CD4-positive, alpha-beta T cell (primary cell): ENCODE measurements at regions of chr11 and their contacts with region 1.

Region 1: DNA sequence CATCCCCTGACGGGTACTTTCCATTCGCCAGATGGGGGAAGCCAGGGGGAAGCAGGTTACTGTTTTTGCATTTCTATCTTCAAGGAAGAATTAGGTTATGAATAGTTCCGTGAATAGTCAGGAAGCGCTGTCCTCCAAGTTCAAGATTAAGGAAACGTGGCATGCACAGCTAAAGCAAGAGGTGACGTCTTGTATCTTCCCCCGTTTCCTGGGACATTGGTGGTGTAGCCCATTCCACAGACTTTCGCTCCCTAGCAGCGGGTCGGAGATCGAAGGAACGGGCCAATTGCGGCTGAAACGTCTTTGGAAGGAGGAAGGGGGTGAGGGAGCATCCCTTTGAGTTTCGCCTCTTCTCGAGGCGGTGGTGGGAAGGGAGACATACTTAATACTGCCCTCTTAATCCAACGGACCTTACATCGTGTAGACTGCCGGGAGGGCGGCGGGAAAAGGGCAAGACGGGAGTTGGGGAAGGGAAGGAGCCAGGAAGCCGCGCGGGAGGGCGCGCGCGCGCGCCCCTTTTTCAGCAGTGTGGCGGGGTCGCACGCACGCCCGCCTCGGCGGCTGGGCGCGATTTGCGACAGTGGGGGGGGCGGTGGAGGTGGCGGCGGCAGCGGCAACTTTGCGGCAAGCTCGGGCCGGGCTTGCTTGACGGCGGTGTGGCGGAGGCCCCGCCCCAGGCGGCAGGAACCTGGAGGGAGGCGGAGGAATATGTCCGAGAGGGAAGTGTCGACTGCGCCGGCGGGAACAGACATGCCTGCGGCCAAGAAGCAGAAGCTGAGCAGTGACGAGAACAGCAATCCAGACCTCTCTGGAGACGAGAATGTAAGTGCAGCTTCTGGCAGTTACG is at the start of gene EED:
- DNase-seq: peak; percentile 86 to 97 (median 93)
- ATAC-seq: peak; percentile 83
- H3K4me3 ChIP-seq: peak within 1 kb of the TSS; percentile 82
- H3K4me3 Mint-ChIP-seq: no peak within 1 kb of the TSS
- H3K27ac ChIP-seq: peak within 1 kb of the TSS; percentile 99
- H3K27ac Mint-ChIP-seq: no peak within 1 kb of the TSS
- H3K4me1 ChIP-seq: peaks cover 4% of the 10 kb centered on the region
- H3K4me1 Mint-ChIP-seq: no peaks in the 10 kb centered on the region
- H3K27me3 ChIP-seq: no peaks in the 10 kb centered on the region
- H3K27me3 Mint-ChIP-seq: no peaks in the 10 kb centered on the region
- CTCF ChIP-seq: no peak
- total RNA-seq, gene EED: 32.1 to 35.4 TPM

Region 2: GRCh38 chr11:85647604-85648299 is 597.0 kb before region 1 on chr11 and contains the start of gene TMEM126A:
- CTCF ChIA-PET with region 1: no interaction called
- POLR2A ChIA-PET with region 1: interaction called, 15 read pairs
- intact Hi-C with region 1: loop called in 1 of 2 experiments (anchors 5 kb)
- DNase-seq: peak; percentile 81 to 95 (median 88)
- ATAC-seq: peak; percentile 99
- H3K4me3 ChIP-seq: peak within 1 kb of the TSS; percentile 84
- H3K4me3 Mint-ChIP-seq: peak within 1 kb of the TSS; percentile 97
- H3K27ac ChIP-seq: peak within 1 kb of the TSS; percentile 77 to 84
- H3K27ac Mint-ChIP-seq: peak within 1 kb of the TSS; percentile 89
- H3K4me1 ChIP-seq: peaks cover 20% of the 10 kb centered on the region
- H3K4me1 Mint-ChIP-seq: peaks cover 44% of the 10 kb centered on the region
- H3K27me3 ChIP-seq: peaks cover 0 to 8% of the 10 kb centered on the region in 2 experiments
- H3K27me3 Mint-ChIP-seq: peaks cover 23% of the 10 kb centered on the region
- CTCF ChIP-seq: no peak
- total RNA-seq, gene TMEM126A: 17.0 to 19.5 TPM

Region 3: DNA sequence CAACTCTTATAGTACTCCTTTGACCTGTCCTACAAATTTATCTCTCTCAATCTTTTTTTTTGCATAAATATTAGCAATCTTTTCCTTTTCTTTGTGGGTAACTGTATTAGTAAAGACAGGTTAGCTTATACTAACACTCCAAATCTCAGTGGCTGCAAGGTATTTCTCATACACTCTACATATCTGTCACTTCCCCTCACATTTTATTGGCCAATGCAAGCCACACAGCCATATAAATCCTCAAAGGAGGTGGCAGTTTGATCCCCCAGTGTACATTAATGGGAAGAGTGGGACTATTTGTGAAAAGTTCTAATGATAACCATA is 42.8 kb before region 1 on chr11:
- CTCF ChIA-PET with region 1: interaction called, 3 read pairs
- POLR2A ChIA-PET with region 1: no interaction called
- intact Hi-C with region 1: loop called in 1 of 2 experiments (anchors 1 kb)
- DNase-seq: peak in 4 of 14 experiments; percentile 6 to 43 (median 30)
- ATAC-seq: peak; percentile 71
- H3K4me3 ChIP-seq: peak overlapping the region; percentile 57
- H3K4me3 Mint-ChIP-seq: no peak overlapping the region
- H3K27ac ChIP-seq: no peak overlapping the region
- H3K27ac Mint-ChIP-seq: no peak overlapping the region
- H3K4me1 ChIP-seq: peaks cover 7% of the 10 kb centered on the region
- H3K4me1 Mint-ChIP-seq: no peaks in the 10 kb centered on the region
- H3K27me3 ChIP-seq: no peaks in the 10 kb centered on the region
- H3K27me3 Mint-ChIP-seq: no peaks in the 10 kb centered on the region
- CTCF ChIP-seq: no peak

Region 4: DNA sequence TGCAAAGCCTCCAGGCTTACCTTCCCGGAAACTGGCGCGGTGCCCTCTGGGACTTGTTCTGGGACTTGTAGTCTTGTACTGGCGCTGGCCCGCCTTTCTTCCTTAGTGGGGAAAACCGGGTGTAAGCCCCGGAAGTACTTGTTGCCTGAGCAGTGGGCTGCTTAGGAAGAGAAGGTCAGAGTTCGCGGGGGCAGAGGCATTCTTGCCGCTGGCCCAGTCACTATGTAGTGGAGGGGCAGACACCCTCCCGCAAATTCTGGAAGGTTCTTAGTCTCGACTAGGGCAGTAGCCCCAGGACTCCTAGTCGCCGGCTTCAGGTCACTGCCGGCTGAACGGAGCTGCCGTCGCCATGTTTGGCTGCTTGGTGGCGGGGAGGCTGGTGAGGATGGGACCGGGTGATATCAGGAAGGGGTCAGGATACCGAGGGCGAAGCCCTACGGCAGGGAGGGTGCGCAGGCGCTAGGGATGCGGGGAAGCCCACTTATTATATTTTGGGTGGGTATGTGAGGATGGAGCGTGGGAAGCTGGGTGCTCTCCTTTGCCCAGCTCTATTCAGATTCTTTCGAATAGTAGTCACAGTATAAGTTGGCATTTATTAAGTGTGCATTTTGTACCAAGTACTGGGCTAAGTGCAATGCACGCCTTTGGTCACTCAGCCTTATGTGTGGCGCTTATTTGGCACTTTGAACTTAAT is 57.5 kb after region 1 on chr11 and contains the start of gene HIKESHI:
- CTCF ChIA-PET with region 1: interaction called, 4 read pairs
- POLR2A ChIA-PET with region 1: interaction called, 6 read pairs
- intact Hi-C with region 1: loop called (anchors 1 to 2 kb)
- DNase-seq: peak; percentile 81 to 95 (median 90)
- ATAC-seq: peak; percentile 97
- H3K4me3 ChIP-seq: peak within 1 kb of the TSS; percentile 83
- H3K4me3 Mint-ChIP-seq: peak within 1 kb of the TSS; percentile 99
- H3K27ac ChIP-seq: peak within 1 kb of the TSS; percentile 58 to 85
- H3K27ac Mint-ChIP-seq: peak within 1 kb of the TSS; percentile 98
- H3K4me1 ChIP-seq: peaks cover 3% of the 10 kb centered on the region
- H3K4me1 Mint-ChIP-seq: peaks cover 33% of the 10 kb centered on the region
- H3K27me3 ChIP-seq: no peaks in the 10 kb centered on the region
- H3K27me3 Mint-ChIP-seq: no peaks in the 10 kb centered on the region
- CTCF ChIP-seq: no peak
- total RNA-seq, gene HIKESHI: 6.3 to 6.6 TPM

Region 5: DNA sequence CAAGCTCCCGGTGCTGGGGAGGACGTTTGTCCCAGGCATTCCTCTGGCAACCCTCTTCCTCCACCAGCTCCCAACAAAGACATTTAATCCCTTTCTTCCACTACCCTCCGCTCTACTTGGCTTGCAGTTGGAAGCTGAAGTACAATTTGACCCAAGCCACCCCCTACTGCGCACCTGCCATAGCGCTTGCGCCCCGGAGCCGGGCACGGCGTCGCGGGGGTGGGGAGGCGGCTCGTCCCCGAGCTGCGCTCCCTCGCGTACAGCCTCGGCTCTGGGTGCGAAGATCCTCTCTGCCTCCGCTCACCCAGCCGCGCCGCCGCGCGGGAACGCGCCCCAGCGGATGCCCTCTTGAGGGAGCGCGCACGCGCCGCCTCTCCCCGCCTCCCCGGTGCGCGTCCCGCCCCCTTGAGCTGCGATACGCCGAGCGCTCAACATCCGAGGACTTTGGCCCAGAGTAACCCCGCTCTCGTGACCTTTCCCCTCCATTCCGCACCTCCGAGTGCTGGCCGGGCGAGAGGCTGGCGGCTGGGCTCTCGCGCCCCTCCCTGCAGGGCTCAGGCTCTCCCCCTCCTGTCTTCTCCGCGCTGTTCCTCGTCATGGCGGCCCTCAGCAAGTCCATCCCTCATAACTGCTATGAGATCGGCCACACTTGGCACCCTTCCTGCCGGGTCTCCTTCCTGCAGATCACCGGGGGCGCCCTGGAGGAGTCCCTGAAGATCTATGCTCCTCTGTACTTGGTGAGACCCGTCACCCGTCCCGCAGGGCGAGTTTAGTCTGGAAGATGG is 792.9 kb after region 1 on chr11 and contains the start of gene TMEM135:
- CTCF ChIA-PET with region 1: no interaction called
- POLR2A ChIA-PET with region 1: no interaction called
- intact Hi-C with region 1: loop called in 1 of 2 experiments (anchors 5 kb)
- DNase-seq: peak; percentile 81 to 95 (median 90)
- ATAC-seq: peak; percentile 95
- H3K4me3 ChIP-seq: peak within 1 kb of the TSS; percentile 95
- H3K4me3 Mint-ChIP-seq: peak within 1 kb of the TSS; percentile 96
- H3K27ac ChIP-seq: peak within 1 kb of the TSS; percentile 39 to 73
- H3K27ac Mint-ChIP-seq: peak within 1 kb of the TSS; percentile 85
- H3K4me1 ChIP-seq: peaks cover 20% of the 10 kb centered on the region
- H3K4me1 Mint-ChIP-seq: peaks cover 57% of the 10 kb centered on the region
- H3K27me3 ChIP-seq: no peaks in the 10 kb centered on the region
- H3K27me3 Mint-ChIP-seq: no peaks in the 10 kb centered on the region
- CTCF ChIP-seq: no peak
- total RNA-seq, gene TMEM135: 14.1 to 15.6 TPM